CD14-positive monocyte (primary cell): ENCODE measurements at regions of chr9 and their contacts with region 1.

Region 1: GRCh38 chr9:117718085-117718484 is 13.9 kb downstream of the TLR4 start:
- DNase-seq: peak; percentile 88 to 98 (median 95)
- H3K4me3 ChIP-seq: peak overlapping the region in 2 of 3 experiments; percentile 16 to 59
- H3K4me3 Mint-ChIP-seq: no peak overlapping the region
- H3K27ac ChIP-seq: peak overlapping the region in 1 of 2 donors; percentile 83
- H3K27ac Mint-ChIP-seq: peak overlapping the region; percentile 80 to 93 (median 90)
- H3K4me1 ChIP-seq: peaks cover 93 to 100% of the 10 kb centered on the region in 2 donors
- H3K4me1 Mint-ChIP-seq: peaks cover 91% of the 10 kb centered on the region
- H3K27me3 ChIP-seq: no peaks in the 10 kb centered on the region
- H3K27me3 Mint-ChIP-seq: no peaks in the 10 kb centered on the region
- CTCF ChIP-seq: no peak

Region 2: DNA sequence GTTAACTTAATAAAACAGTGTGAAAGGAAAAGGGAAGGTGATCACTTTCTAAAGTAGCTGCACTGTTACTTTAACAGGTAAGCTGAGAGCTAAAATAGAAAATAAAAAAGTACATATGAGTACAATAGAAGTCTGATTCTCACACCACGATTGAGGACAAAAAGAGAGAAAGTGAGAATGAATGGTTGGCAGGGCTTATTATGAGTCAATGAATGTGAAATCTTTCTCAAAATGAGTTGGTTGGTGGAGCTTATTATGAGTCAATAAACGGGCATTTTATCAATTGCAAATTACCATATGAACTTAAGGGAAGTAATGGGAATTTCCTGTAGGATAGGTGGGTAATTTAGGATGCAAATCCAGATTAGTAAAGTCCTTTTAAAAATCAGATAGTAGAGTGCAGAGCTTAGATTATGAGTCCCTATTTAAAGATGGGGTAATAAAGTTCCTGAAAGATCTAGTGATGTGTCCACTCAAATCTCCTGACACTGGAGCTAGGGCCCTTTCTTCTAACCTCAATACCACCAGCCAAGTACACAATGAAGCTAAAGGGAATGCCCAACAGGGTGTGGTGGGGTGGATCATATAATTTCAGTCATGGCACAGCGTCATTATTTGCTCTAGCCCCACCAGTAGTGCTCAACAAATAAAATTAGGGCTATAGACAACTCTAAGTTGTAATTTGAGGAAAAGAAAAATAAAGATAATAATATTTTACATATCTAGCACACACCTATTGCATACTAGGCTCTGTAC is 35.0 kb before region 1 on chr9:
- intact Hi-C with region 1: no loop called
- DNase-seq: no peak
- H3K4me3 ChIP-seq: no peak overlapping the region
- H3K4me3 Mint-ChIP-seq: no peak overlapping the region
- H3K27ac ChIP-seq: no peak overlapping the region
- H3K27ac Mint-ChIP-seq: no peak overlapping the region
- H3K4me1 ChIP-seq: peaks cover 4 to 14% of the 10 kb centered on the region in 2 donors
- H3K4me1 Mint-ChIP-seq: peaks cover 21% of the 10 kb centered on the region
- H3K27me3 ChIP-seq: no peaks in the 10 kb centered on the region
- H3K27me3 Mint-ChIP-seq: peaks cover 0 to 2% (median 0%) of the 10 kb centered on the region in 3 donors
- CTCF ChIP-seq: no peak

Region 3: DNA sequence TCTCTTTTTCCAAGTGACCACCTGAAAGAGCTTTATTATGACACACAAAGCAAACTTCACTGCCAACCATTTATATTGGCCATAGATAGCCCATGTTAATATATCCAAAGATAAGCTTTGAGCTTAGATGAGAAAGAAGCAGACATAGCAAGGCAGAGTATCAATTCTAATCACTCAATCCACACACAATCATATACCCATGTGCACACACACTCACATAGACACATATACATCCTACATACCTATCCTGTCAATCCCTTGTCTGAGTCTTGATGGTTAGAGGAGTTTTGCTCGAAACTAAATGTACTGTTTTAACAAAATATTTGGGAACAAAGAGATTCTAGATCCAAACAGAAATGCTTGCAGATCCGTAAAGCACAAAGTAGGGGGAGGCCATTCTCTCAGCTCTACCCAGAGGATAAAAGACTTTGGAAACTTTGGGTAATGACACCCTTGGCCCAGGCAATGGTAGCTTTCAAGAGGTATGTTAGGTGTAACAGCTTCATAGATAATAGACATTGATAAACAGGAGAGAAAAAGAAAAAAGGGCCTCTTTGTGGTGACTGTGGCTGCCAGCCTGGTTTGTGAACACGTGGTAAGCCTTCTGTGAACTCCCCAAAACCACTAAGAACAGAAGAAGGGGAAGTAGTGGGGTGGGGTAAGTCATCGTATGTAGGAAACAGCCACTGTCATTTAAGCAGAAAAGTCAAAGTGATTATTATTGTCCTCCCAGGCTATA is 107.7 kb after region 1 on chr9:
- intact Hi-C with region 1: loop called in 1 of 2 experiments (anchors 10 kb)
- DNase-seq: peak; percentile 68 to 86 (median 73)
- H3K4me3 ChIP-seq: peak overlapping the region in 1 of 3 experiments; percentile 53
- H3K4me3 Mint-ChIP-seq: peak overlapping the region in 1 of 2 donors; percentile 68
- H3K27ac ChIP-seq: peak overlapping the region in 1 of 2 donors; percentile 78
- H3K27ac Mint-ChIP-seq: peak overlapping the region; percentile 79 to 91 (median 88)
- H3K4me1 ChIP-seq: peaks cover 33 to 49% of the 10 kb centered on the region in 2 donors
- H3K4me1 Mint-ChIP-seq: peaks cover 52% of the 10 kb centered on the region
- H3K27me3 ChIP-seq: no peaks in the 10 kb centered on the region
- H3K27me3 Mint-ChIP-seq: peaks cover 0 to 10% (median 2%) of the 10 kb centered on the region in 3 donors
- CTCF ChIP-seq: no peak